ENCODE measurements at regions of chr10 and their contacts with region 1.

Region 1: DNA sequence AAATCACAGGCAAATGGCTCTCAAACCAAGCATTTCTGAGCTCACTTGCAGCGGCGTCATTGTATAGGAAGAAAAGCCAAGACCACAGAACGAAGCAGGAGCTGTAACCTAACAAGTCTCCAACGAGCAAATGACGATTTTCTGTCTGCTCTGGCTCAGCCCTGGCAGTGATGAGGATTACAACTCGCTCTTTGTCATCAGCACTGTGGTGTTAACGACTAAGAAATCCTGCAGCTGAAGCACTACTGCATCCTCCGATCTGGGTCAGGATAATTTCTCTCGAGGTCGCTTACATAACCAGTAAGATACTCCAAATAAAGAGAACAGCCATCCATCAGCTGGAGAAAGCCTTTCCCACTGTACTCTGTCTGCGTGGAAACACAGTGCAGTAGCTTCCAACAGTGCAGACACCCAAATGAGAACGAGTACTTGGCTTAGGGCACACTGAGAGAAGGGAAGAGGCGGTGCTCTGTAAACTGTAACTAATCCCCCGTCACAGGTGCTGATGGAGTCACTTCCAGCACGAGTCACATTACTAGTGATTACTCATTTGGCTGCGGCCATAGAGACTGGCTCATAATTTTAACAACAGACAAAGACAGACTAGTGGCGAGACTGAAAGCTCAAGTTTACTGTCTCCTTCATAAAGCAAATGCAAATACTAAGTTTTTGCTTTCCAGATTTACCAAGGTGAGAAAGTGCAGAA is 135.8 kb downstream of the NRBF2 start:
- DNase-seq: peak; percentile 60 to 96 (median 70)
- ATAC-seq: peak; percentile 88
- H3K4me3 ChIP-seq: peak overlapping the region; percentile 83
- H3K4me3 Mint-ChIP-seq: peak overlapping the region; percentile 98
- H3K27ac ChIP-seq: peak overlapping the region; percentile 82 to 94
- H3K27ac Mint-ChIP-seq: peak overlapping the region; percentile 98
- H3K4me1 ChIP-seq: peaks cover 5% of the 10 kb centered on the region
- H3K4me1 Mint-ChIP-seq: peaks cover 28% of the 10 kb centered on the region
- H3K27me3 ChIP-seq: no peaks in the 10 kb centered on the region
- H3K27me3 Mint-ChIP-seq: no peaks in the 10 kb centered on the region
- CTCF ChIP-seq: peak; percentile 14

Region 2: DNA sequence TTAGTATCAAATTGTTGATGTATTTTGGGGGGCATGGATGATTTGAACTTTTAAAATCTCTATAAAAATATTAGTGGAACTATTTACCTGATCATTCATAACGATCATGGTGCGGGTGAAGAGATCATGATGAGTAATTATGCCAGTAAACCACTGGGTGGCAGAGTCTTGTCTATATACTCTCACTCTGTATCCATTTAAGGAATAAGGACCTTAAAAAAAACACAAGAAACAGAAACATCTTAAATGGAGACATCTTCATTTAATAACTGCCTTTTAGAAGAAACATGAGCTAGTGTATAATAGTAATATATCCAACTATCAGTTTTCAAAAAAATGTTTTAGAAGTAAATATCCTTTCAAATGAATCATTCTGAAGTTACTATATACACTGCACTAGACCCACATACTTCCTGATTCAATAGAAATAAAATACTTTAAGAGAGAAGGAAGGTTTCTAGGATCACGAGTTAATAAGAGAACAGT is 51.8 kb before region 1 on chr10:
- CTCF ChIA-PET with region 1: interaction called, 16 read pairs
- POLR2A ChIA-PET with region 1: interaction called, 8 read pairs
- intact Hi-C with region 1: loop called (anchors 1 to 5 kb)
- DNase-seq: peak in 4 of 14 experiments; percentile 32 to 75 (median 74)
- ATAC-seq: peak; percentile 92
- H3K4me3 ChIP-seq: no peak overlapping the region
- H3K4me3 Mint-ChIP-seq: no peak overlapping the region
- H3K27ac ChIP-seq: no peak overlapping the region
- H3K27ac Mint-ChIP-seq: peak overlapping the region; percentile 40
- H3K4me1 ChIP-seq: peaks cover 6% of the 10 kb centered on the region
- H3K4me1 Mint-ChIP-seq: peaks cover 59% of the 10 kb centered on the region
- H3K27me3 ChIP-seq: no peaks in the 10 kb centered on the region
- H3K27me3 Mint-ChIP-seq: no peaks in the 10 kb centered on the region
- CTCF ChIP-seq: peak; percentile 89

Region 3: DNA sequence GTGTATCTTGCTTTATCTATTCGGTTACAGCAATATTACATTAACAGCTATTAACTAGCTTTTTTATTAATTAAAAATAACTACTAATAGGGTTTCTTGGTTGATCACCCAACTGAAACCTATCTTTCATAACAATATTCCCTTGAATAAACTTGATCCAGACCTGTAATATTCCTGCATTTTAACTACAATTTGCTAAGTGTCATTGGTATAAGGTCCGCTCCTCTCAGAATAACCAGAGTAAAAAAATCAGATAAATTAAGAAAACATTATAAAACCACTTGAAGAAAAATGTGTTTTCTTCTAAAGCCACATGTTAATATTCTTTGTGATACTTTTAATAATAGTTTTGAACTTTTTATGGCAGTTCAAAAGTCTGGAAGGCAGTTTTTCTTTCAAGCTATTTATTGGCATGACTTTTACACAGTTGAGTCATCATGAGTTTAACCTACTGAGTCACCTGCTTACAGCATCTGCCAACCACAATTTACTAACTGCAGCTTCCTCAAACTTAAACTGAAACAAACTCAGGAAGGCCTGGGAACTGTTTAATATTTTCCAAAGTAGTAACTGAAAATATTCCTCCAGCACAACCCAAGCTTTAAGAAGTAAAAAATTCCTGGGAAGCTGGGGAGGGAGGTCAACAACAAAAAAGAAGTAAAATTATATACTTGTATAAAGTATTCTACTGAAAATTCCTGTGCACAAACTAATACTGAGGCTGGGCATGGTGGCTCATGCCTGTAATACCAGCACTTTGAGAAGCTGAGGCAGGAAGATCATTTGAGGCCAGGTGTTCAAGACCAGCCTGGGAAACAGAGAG is 32.6 kb before region 1 on chr10:
- CTCF ChIA-PET with region 1: interaction called, 5 read pairs
- POLR2A ChIA-PET with region 1: interaction called, 17 read pairs
- intact Hi-C with region 1: loop called in 1 of 2 experiments (anchors 2 kb)
- DNase-seq: peak in 3 of 14 experiments; percentile 56 to 65 (median 60)
- ATAC-seq: peak; percentile 73
- H3K4me3 ChIP-seq: no peak overlapping the region
- H3K4me3 Mint-ChIP-seq: peak overlapping the region; percentile 11
- H3K27ac ChIP-seq: no peak overlapping the region
- H3K27ac Mint-ChIP-seq: peak overlapping the region; percentile 20
- H3K4me1 ChIP-seq: peaks cover 21% of the 10 kb centered on the region
- H3K4me1 Mint-ChIP-seq: peaks cover 63% of the 10 kb centered on the region
- H3K27me3 ChIP-seq: no peaks in the 10 kb centered on the region
- H3K27me3 Mint-ChIP-seq: no peaks in the 10 kb centered on the region
- CTCF ChIP-seq: no peak

Region 4: DNA sequence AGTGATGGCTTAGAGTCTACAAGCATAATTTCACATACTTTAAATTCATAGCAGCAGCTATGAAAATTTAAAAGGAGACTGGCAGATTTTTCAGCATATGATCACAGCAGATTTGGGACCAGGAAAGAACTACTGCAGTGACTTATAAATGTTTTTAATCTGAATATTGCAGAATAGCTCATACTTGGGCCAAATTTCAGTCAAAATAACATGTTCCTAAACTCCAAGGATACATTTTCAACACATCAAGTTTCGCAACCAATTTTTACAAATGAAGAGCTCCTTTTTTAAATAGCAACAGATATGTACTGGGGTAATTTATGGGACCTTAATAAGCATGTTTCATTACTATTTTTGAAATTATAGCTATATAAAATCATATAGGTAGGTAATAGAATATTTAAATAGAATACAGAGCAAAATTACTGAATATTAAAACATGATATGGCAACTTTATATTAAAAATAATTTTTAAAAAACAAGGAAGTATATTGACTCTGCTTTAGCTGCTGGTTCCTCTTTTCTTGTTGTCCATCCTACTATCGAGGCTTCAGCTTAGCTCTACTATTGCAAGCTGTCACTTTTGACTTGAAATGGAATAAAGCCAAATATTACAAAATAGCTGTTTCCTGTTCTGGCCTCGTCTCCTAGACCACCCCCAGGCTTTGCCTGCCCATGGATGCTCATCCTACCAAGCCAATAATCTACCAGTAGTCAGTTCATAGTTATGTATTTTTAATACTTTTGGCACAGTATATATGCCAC is 12.8 kb before region 1 on chr10:
- CTCF ChIA-PET with region 1: interaction called, 3 read pairs
- POLR2A ChIA-PET with region 1: interaction called, 54 read pairs
- intact Hi-C with region 1: loop called in 1 of 2 experiments (anchors 2 kb)
- DNase-seq: no peak
- ATAC-seq: no peak
- H3K4me3 ChIP-seq: no peak overlapping the region
- H3K4me3 Mint-ChIP-seq: peak overlapping the region; percentile 31
- H3K27ac ChIP-seq: no peak overlapping the region
- H3K27ac Mint-ChIP-seq: no peak overlapping the region
- H3K4me1 ChIP-seq: peaks cover 28% of the 10 kb centered on the region
- H3K4me1 Mint-ChIP-seq: peaks cover 96% of the 10 kb centered on the region
- H3K27me3 ChIP-seq: no peaks in the 10 kb centered on the region
- H3K27me3 Mint-ChIP-seq: no peaks in the 10 kb centered on the region
- CTCF ChIP-seq: no peak

Region 5: DNA sequence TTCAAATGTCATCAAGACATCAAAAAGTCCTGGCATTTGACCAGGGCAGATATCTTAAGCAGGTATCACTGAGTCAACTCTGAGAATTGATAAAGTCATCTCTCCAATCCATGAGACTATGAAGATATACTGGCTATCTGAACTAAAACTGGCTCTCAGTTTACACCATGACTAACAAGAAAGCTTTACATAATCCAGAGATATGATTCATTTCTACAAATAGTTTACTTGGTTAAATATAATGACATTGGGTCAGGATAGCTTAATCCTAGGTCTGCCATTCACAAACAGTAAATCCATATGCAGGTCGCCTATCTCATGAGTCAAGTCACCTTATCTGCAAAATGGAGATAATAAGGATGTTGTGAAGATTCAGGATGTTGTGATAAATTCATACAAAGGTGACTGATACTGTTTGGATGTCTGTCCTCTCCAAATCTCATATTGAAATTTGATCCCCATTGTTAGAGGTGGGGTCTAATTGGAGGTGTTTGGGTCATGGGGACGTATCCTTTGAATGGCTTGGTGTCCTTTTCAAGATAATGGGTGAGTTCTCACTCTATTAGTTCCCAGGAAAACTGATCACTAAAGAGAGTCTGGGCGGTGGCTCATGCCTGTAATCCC is 79.4 kb after region 1 on chr10:
- CTCF ChIA-PET with region 1: no interaction called
- POLR2A ChIA-PET with region 1: no interaction called
- intact Hi-C with region 1: no loop called
- DNase-seq: no peak
- ATAC-seq: no peak
- H3K4me3 ChIP-seq: no peak overlapping the region
- H3K4me3 Mint-ChIP-seq: no peak overlapping the region
- H3K27ac ChIP-seq: no peak overlapping the region
- H3K27ac Mint-ChIP-seq: no peak overlapping the region
- H3K4me1 ChIP-seq: no peaks in the 10 kb centered on the region
- H3K4me1 Mint-ChIP-seq: peaks cover 28% of the 10 kb centered on the region
- H3K27me3 ChIP-seq: no peaks in the 10 kb centered on the region
- H3K27me3 Mint-ChIP-seq: no peaks in the 10 kb centered on the region
- CTCF ChIP-seq: no peak

Region 6: GRCh38 chr10:63465293-63466143 is 196.6 kb after region 1 on chr10 and contains the start of gene JMJD1C:
- CTCF ChIA-PET with region 1: no interaction called
- POLR2A ChIA-PET with region 1: interaction called, 9 read pairs
- intact Hi-C with region 1: loop called in 1 of 2 experiments (anchors 2 kb)
- DNase-seq: peak; percentile 37 to 81 (median 52)
- ATAC-seq: peak; percentile 64
- H3K4me3 ChIP-seq: peak within 1 kb of the TSS; percentile 91
- H3K4me3 Mint-ChIP-seq: peak within 1 kb of the TSS; percentile 97
- H3K27ac ChIP-seq: peak within 1 kb of the TSS; percentile 49 to 57
- H3K27ac Mint-ChIP-seq: peak within 1 kb of the TSS; percentile 85
- H3K4me1 ChIP-seq: peaks cover 6% of the 10 kb centered on the region
- H3K4me1 Mint-ChIP-seq: peaks cover 67% of the 10 kb centered on the region
- H3K27me3 ChIP-seq: no peaks in the 10 kb centered on the region
- H3K27me3 Mint-ChIP-seq: no peaks in the 10 kb centered on the region
- CTCF ChIP-seq: no peak
- total RNA-seq, gene JMJD1C: 389 to 399 TPM

Region 7: GRCh38 chr10:63866075-63866746 is 597.3 kb after region 1 on chr10:
- CTCF ChIA-PET with region 1: no interaction called
- POLR2A ChIA-PET with region 1: no interaction called
- intact Hi-C with region 1: no loop called
- DNase-seq: peak in 12 of 14 experiments; percentile 1 to 53 (median 20)
- ATAC-seq: peak; percentile 74
- H3K4me3 ChIP-seq: no peak overlapping the region
- H3K4me3 Mint-ChIP-seq: no peak overlapping the region
- H3K27ac ChIP-seq: no peak overlapping the region
- H3K27ac Mint-ChIP-seq: no peak overlapping the region
- H3K4me1 ChIP-seq: peaks cover 8% of the 10 kb centered on the region
- H3K4me1 Mint-ChIP-seq: peaks cover 13% of the 10 kb centered on the region
- H3K27me3 ChIP-seq: peaks cover 19 to 37% of the 10 kb centered on the region in 2 experiments
- H3K27me3 Mint-ChIP-seq: peaks cover 69% of the 10 kb centered on the region
- CTCF ChIP-seq: peak; percentile 83